ENCODE measurements at regions of chr10 and their contacts with region 1.

Region 1: GRCh38 chr10:126252884-126253618 is 135.2 kb downstream of the ADAM12 start:
- DNase-seq: peak; percentile 93
- H3K4me3 ChIP-seq: no peak overlapping the region
- H3K27ac ChIP-seq: peak overlapping the region; percentile 87
- H3K27me3 ChIP-seq: no peaks in the 10 kb centered on the region
- CTCF ChIP-seq: no peak

Region 2: DNA sequence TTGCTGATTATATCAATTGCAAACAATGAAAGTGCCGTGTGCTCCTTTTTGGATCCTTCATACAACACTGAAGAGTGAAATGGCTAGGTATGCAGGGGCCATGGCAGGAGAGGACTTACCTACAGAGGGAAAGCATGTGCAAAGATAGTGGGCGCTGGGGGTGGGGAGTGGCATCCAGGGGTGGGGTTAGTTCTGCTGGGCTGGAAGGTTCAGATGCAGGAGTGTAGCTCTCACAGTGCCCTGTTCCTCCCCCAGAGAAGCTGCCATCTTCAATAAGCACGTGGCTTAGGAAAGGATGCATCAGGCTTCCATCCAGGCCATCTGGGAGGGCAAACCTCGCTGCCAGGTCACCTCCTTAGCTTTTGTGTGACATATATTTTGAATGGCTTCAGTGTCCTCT is 113.6 kb before region 1 on chr10:
- CTCF ChIA-PET with region 1: interaction called, 10 read pairs
- POLR2A ChIA-PET with region 1: no interaction called
- DNase-seq: no peak
- H3K4me3 ChIP-seq: no peak overlapping the region
- H3K27ac ChIP-seq: no peak overlapping the region
- H3K27me3 ChIP-seq: no peaks in the 10 kb centered on the region
- CTCF ChIP-seq: no peak